Mammary epithelial cell (primary cell): ENCODE measurements at regions of chr13 and their contacts with region 1.

Region 1: GRCh38 chr13:40992678-40993518 is 26.2 kb downstream of the ELF1 start:
- DNase-seq: no peak
- H3K4me3 ChIP-seq: no peak overlapping the region
- H3K27ac ChIP-seq: peak overlapping the region; percentile 88
- H3K4me1 ChIP-seq: peaks cover 28% of the 10 kb centered on the region
- H3K27me3 ChIP-seq: no peaks in the 10 kb centered on the region
- CTCF ChIP-seq: peak in 1 of 2 donors; percentile 16

Region 2: GRCh38 chr13:40777166-40777808 is 215.6 kb before region 1 on chr13:
- CTCF ChIA-PET with region 1: no interaction called
- dilution Hi-C with region 1: no loop called
- in situ Hi-C with region 1: no loop called
- intact Hi-C with region 1: loop called (anchors 1 kb)
- DNase-seq: peak; percentile 47
- H3K4me3 ChIP-seq: peak overlapping the region in 1 of 3 experiments; percentile 24
- H3K27ac ChIP-seq: no peak overlapping the region
- H3K4me1 ChIP-seq: peaks cover 6% of the 10 kb centered on the region
- H3K27me3 ChIP-seq: no peaks in the 10 kb centered on the region
- CTCF ChIP-seq: peak; percentile 42 to 56

Region 3: GRCh38 chr13:40789275-40790133 is 203.4 kb before region 1 on chr13 and contains the start of gene SLC25A15:
- CTCF ChIA-PET with region 1: interaction called, 4 read pairs
- dilution Hi-C with region 1: no loop called
- in situ Hi-C with region 1: loop called in 1 of 2 experiments (anchors 10 kb)
- intact Hi-C with region 1: no loop called
- DNase-seq: peak; percentile 78
- H3K4me3 ChIP-seq: peak within 1 kb of the TSS; percentile 79 to 99 (median 89)
- H3K27ac ChIP-seq: peak within 1 kb of the TSS; percentile 70
- H3K4me1 ChIP-seq: no peaks in the 10 kb centered on the region
- H3K27me3 ChIP-seq: no peaks in the 10 kb centered on the region
- CTCF ChIP-seq: no peak
- total RNA-seq, gene SLC25A15: 15.3 to 17.2 TPM

Region 4: DNA sequence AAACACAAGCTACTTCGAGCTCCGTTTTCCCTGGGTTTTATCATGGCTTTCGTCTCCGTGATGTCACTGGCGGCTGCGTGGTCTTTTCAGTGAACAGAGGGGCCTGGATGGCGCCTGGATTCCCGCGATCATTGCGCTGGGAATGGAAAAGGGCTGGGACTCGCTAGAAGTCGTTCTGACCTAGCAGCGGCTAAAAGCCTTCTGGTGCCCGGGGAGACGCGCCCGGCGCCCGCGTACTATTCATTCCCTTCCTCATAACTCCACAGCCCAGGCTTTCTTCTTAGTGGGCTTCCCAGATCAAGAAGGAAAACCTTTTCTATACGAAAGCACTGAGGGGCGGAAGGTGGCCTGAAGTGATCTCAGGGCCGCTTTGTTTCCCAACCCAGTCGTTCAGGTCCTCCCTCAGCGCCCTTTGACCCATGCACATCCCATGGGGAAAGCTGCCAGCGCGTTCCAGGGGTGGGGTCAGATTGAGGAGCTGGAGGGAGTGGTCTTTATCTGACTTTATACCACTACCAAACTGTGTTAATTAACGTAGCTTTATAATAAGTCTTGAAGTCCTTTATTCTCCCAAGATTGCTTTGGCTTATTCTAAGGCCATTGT is 70.4 kb before region 1 on chr13:
- CTCF ChIA-PET with region 1: no interaction called
- dilution Hi-C with region 1: no loop called
- in situ Hi-C with region 1: no loop called
- intact Hi-C with region 1: loop called (anchors 1 kb)
- DNase-seq: no peak
- H3K4me3 ChIP-seq: no peak overlapping the region
- H3K27ac ChIP-seq: no peak overlapping the region
- H3K4me1 ChIP-seq: peaks cover 4% of the 10 kb centered on the region
- H3K27me3 ChIP-seq: no peaks in the 10 kb centered on the region
- CTCF ChIP-seq: no peak

Region 5: DNA sequence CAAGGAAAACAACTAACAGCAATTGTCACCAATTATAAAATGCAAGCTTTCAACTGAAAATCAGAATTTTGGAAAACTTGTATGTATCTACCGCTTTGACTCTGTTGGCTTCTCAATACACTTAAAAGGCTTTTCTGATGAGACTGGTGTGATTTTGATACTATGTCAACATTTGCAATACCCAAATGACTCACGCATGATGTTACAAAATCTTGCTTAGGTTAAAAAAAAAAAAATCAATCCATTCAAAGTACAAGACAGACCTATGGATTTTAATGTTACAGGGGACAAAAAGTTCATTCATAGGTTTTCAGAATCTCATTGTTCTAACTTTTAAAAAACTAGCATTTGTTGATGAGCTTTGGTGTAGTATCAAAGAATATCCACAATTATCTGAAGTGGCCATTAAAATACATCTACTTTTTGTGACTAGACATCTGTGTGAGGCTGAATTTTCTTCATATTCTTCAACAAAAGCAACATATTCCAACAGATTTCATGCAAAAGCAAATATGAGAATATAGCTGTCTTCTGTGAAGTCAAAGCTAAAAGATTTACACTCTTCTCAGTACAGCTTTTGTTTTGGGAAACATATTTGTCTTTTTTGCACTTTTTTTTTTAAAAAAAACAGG is 15.6 kb after region 1 on chr13:
- CTCF ChIA-PET with region 1: no interaction called
- dilution Hi-C with region 1: no loop called
- in situ Hi-C with region 1: no loop called
- intact Hi-C with region 1: loop called (anchors 2 kb)
- DNase-seq: peak; percentile 76
- H3K4me3 ChIP-seq: peak overlapping the region in 1 of 3 experiments; percentile 20
- H3K27ac ChIP-seq: peak overlapping the region; percentile 61
- H3K4me1 ChIP-seq: peaks cover 24% of the 10 kb centered on the region
- H3K27me3 ChIP-seq: no peaks in the 10 kb centered on the region
- CTCF ChIP-seq: no peak

Region 6: GRCh38 chr13:41019011-41019487 is 26.2 kb after region 1 on chr13 and contains the start of gene ELF1:
- CTCF ChIA-PET with region 1: no interaction called
- dilution Hi-C with region 1: no loop called
- in situ Hi-C with region 1: no loop called
- intact Hi-C with region 1: loop called (anchors 1 kb)
- DNase-seq: peak; percentile 90
- H3K4me3 ChIP-seq: peak within 1 kb of the TSS; percentile 58 to 73 (median 72)
- H3K27ac ChIP-seq: peak within 1 kb of the TSS; percentile 100
- H3K4me1 ChIP-seq: peaks cover 12% of the 10 kb centered on the region
- H3K27me3 ChIP-seq: no peaks in the 10 kb centered on the region
- CTCF ChIP-seq: no peak
- total RNA-seq, gene ELF1: 48.0 to 66.3 TPM

Region 7: DNA sequence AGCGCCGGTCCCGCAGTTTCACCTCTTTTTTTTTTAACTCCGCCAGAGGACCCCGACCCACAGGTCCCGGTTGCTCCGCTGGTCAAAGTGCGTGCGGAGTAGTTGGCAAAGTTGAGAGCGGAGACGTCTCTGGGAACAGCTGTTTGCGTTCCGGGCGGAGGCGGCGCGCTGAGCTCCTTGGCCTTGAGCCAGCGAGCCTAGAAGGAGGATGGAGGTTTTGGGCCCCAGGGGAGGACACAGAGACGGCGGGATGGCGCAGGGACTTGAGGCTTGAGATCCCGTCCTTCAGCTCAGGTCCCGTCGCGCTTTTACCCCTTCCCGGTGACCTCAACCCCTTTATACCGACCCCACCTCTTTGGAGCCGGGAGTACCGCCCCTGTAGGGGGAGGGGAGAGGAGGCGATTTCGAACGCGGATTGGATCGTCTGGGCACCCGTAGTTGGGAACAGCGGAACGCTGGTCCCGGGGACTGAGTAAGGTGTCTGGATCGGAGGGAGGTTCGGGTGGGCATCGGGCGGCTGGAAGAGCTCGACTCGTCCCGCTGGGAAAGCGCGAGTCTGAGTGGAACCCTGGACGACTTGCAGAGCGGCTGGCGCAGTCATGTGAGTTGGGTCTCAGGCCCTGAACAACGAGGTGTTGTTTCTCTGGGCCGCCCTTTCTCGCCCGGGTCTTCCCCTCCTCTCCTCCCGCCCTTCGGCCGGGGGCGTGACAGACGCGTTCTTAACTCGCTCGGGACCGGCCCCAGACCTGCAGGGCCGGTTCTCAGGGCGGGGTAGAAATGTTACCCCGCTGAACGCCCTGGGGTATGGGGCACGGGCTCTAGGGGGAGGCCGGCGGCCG is 68.4 kb after region 1 on chr13 and contains the start of gene WBP4:
- CTCF ChIA-PET with region 1: no interaction called
- dilution Hi-C with region 1: no loop called
- in situ Hi-C with region 1: no loop called
- intact Hi-C with region 1: loop called (anchors 1 kb)
- DNase-seq: peak; percentile 97
- H3K4me3 ChIP-seq: peak within 1 kb of the TSS; percentile 86 to 97 (median 87)
- H3K27ac ChIP-seq: peak within 1 kb of the TSS; percentile 99
- H3K4me1 ChIP-seq: peaks cover 25% of the 10 kb centered on the region
- H3K27me3 ChIP-seq: no peaks in the 10 kb centered on the region
- CTCF ChIP-seq: peak in 1 of 2 donors; percentile 27
- total RNA-seq, gene WBP4: 5.0 to 12.4 TPM